Right ventricle myocardium inferior (tissue), 1 donor: ENCODE measurements at regions of chr14 and their contacts with region 1.

Region 1: GRCh38 chr14:76876076-76876475 is 49.9 kb downstream of the LRRC74A start:
- DNase-seq: no peak
- ATAC-seq: peak; percentile 92

Region 2: GRCh38 chr14:76926521-76927251 is 50.6 kb after region 1 on chr14:
- intact Hi-C with region 1: no loop called
- DNase-seq: peak; percentile 80
- ATAC-seq: peak; percentile 72

Region 3: GRCh38 chr14:77053046-77053841 is 177.2 kb after region 1 on chr14:
- intact Hi-C with region 1: loop called (anchors 5 kb)
- DNase-seq: peak; percentile 90
- ATAC-seq: peak; percentile 72

Region 4: DNA sequence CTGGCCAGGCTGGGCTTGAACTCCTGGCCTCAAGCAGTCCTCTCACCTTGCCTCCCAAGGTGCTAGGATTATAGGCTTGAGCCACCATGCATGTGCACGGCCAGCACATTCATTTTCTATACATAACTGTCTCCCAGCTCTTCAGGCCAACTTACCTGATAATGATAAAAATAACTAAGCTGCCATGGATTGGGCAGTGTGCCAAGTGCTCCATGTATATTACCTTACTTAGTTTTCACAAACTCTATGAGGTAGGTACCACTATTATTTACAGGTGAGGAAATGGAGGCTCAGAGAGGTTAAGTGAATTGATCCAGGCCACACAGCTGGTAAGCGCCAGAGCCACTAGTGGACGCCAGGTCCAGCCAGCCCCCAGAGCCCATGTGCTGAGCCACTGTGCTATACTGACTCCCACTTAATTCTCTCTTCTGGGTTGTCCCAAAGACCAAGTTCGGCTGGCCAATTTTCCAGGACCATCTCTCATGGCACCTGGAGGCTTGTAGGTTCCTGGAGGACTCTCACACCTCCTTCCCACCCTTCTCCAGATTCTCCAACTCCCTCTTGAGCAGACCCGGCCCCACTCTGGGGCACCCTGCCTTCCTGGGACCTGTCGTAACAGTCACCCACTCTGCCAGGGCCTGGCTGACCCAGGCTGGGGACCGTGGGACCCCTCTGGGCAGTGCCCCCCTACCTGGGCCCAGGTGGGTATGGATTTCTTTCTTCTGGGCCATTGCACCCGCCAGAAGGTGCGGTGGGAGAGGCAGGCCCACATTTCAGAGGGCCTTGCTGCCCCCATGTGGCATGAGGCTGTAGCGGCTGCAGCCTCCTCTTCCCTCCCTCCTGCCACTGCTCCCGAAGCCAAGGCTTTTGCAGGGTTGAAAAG is 191.8 kb after region 1 on chr14:
- intact Hi-C with region 1: loop called (anchors 1 kb)
- DNase-seq: peak; percentile 81
- ATAC-seq: peak; percentile 70

Region 5: GRCh38 chr14:77554207-77554606 is 678.1 kb after region 1 on chr14:
- intact Hi-C with region 1: loop called (anchors 10 kb)
- DNase-seq: no peak
- ATAC-seq: no peak